Activated naive CD4-positive, alpha-beta T cell treated with anti-CD3 and anti-CD28 coated beads for 36 hours (primary cell): ENCODE measurements at regions of chr16 and their contacts with region 1.

Region 1: GRCh38 chr16:81006814-81007696 is at the starts of genes CENPN and CMC2:
- DNase-seq: peak; percentile 98
- H3K4me3 Mint-ChIP-seq: peak within 1 kb of the TSS; percentile 95
- H3K27ac Mint-ChIP-seq: peak within 1 kb of the TSS; percentile 100
- H3K4me1 Mint-ChIP-seq: peaks cover 50% of the 10 kb centered on the region
- H3K27me3 Mint-ChIP-seq: no peaks in the 10 kb centered on the region
- total RNA-seq, gene CENPN: 65.1 to 75.0 TPM
- total RNA-seq, gene CMC2: 112 to 122 TPM

Region 2: GRCh38 chr16:80518436-80518835 is 488.6 kb before region 1 on chr16:
- CTCF ChIA-PET with region 1: no interaction called
- intact Hi-C with region 1: loop called (anchors 10 kb)
- DNase-seq: peak; percentile 71
- H3K4me3 Mint-ChIP-seq: no peak overlapping the region
- H3K27ac Mint-ChIP-seq: no peak overlapping the region
- H3K4me1 Mint-ChIP-seq: peaks cover 21% of the 10 kb centered on the region
- H3K27me3 Mint-ChIP-seq: peaks cover 20% of the 10 kb centered on the region

Region 3: DNA sequence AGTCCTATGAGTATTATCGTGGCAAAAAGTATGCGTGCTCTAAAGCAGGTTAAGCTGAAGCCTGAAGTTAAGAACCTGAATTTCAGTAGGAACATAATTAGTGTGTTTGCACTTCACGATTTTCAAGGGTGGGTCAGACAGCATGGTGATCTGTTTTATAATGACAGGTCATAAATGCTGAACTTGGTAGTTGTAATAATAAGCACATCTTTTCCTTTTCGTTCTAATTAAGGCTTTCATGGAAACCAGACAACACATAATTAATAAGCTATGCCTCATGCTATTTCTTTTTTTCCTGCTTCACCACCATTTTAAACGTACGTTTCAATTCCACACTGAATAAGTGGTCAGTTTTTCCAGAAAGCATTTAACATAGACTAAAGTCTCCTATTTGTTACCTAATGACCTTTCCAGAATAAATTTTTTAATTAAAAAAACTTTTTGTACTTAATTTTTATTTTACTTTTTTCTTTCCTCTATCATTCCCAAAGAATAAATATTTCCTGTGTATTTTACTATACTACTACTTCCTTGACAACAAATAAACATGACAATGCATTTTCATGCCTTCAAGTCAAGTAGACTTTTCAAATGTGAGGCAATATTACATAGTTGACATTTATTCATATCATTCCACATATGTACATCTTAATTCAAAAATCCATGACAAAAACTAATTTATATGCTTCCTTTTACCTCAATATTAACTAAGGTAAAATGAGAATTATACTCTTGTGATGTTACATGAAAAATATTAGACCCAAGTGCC is 22.7 kb before region 1 on chr16:
- CTCF ChIA-PET with region 1: no interaction called
- intact Hi-C with region 1: no loop called
- DNase-seq: no peak
- H3K4me3 Mint-ChIP-seq: no peak overlapping the region
- H3K27ac Mint-ChIP-seq: no peak overlapping the region
- H3K4me1 Mint-ChIP-seq: peaks cover 25% of the 10 kb centered on the region
- H3K27me3 Mint-ChIP-seq: no peaks in the 10 kb centered on the region

Region 4: DNA sequence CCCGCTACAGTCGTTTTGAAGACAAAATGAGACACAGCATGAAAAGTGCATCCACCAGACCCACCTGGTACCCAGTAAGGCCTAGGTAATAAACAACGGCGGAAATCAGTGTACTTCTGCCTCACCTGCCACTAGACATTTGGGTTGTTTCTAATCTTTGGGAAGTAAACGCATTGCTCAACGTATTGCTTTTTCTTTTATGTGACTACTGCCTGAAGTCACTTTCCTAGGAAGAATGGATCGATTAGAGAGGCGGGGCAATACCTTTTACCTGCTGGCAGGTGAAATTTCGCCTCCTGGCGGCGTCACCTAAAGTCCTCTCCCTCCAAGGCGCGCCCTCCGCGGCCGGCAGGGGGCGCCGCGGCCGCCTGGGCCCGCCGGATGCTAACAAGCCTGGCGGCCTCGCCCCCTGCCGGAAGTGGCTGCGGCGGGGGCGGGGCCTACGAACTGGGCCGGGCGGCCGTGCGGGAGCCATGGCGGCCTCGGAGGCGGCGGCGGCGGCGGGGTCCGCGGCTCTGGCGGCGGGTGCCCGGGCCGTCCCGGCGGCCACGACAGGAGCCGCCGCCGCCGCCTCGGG is 28.4 kb after region 1 on chr16 and contains the start of gene ATMIN:
- CTCF ChIA-PET with region 1: interaction called, 42 read pairs
- intact Hi-C with region 1: loop called (anchors 1 kb)
- DNase-seq: peak; percentile 85
- H3K4me3 Mint-ChIP-seq: peak within 1 kb of the TSS; percentile 81
- H3K27ac Mint-ChIP-seq: peak within 1 kb of the TSS; percentile 37
- H3K4me1 Mint-ChIP-seq: peaks cover 34% of the 10 kb centered on the region
- H3K27me3 Mint-ChIP-seq: no peaks in the 10 kb centered on the region
- total RNA-seq, gene ATMIN: 16.6 to 18.9 TPM

Region 5: GRCh38 chr16:81095953-81096717 is 89.1 kb after region 1 on chr16 and contains the start of gene GCSH:
- CTCF ChIA-PET with region 1: no interaction called
- intact Hi-C with region 1: loop called (anchors 1 kb)
- DNase-seq: peak; percentile 98
- H3K4me3 Mint-ChIP-seq: peak within 1 kb of the TSS; percentile 78
- H3K27ac Mint-ChIP-seq: peak within 1 kb of the TSS; percentile 51
- H3K4me1 Mint-ChIP-seq: peaks cover 17% of the 10 kb centered on the region
- H3K27me3 Mint-ChIP-seq: no peaks in the 10 kb centered on the region
- total RNA-seq, gene GCSH: 25.7 to 27.4 TPM